ENCODE measurements at regions of chr6 and their contacts with region 1.

Region 1: DNA sequence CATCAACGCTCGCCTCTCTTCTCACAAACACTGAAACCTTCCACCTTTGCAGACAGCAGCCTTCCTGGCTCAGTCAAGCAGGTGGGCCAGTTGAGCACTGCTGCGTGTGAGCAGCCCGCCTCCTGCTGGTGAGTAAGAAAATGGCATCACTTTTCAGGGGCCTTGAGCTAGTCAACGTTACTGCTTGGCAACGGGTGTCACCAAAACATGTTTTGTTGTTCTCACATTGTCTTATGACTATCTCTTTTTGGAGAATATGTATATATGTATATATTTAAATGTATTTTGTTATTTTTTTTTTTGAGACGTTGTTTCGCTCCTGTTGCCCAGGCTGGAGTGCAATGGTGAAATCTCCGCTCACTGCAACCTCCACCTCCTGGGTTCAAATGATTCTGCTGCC is 97.0 kb upstream of the AGPAT4 start:
- DNase-seq: peak; percentile 61
- ATAC-seq: peak; percentile 53

Region 2: GRCh38 chr6:160733050-160733646 is 637.7 kb before region 1 on chr6:
- intact Hi-C with region 1: loop called (anchors 5 kb)
- DNase-seq: no peak
- ATAC-seq: peak; percentile 70

Region 3: GRCh38 chr6:160930547-160931377 is 440.1 kb before region 1 on chr6:
- intact Hi-C with region 1: loop called (anchors 5 kb)
- DNase-seq: peak; percentile 82
- ATAC-seq: peak; percentile 97

Region 4: GRCh38 chr6:161101517-161101916 is 269.4 kb before region 1 on chr6:
- intact Hi-C with region 1: loop called (anchors 10 kb)
- DNase-seq: no peak
- ATAC-seq: no peak

Region 5: DNA sequence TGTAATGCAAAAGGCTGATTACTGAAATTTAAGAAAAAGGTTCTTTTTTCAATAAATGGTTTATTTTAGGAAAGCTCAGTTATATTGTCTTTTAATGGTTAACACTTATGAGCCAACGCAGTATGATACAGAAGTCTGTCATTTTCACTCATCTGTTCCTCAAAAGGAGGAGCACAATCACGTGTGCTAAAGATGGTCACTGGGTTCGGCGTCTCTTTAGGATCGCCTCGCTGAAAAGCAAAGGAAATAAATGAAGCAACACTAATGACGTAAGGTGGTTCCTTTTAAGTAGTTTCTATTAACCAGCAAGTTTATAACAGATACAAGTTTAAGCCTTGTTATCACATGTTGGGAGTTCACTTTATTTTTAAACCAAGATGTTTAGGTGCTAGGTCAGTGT is 253.6 kb before region 1 on chr6:
- intact Hi-C with region 1: no loop called
- DNase-seq: no peak
- ATAC-seq: no peak

Region 6: GRCh38 chr6:161154796-161155335 is 216.0 kb before region 1 on chr6:
- intact Hi-C with region 1: loop called (anchors 5 kb)
- DNase-seq: no peak
- ATAC-seq: no peak